ENCODE measurements at regions of chr11 and their contacts with region 1.

Region 1: GRCh38 chr11:134050541-134051383 is 18.1 kb upstream of the JAM3 start:
- DNase-seq: peak in 1 of 2 donors; percentile 34
- H3K4me3 ChIP-seq: peak overlapping the region in 2 of 3 donors; percentile 21 to 45
- H3K27ac ChIP-seq: no peak overlapping the region
- H3K4me1 ChIP-seq: peaks cover 0 to 2% of the 10 kb centered on the region in 2 donors
- H3K27me3 ChIP-seq: peaks cover 0 to 19% of the 10 kb centered on the region in 2 donors
- CTCF ChIP-seq: peak; percentile 71 to 92 (median 90)
- POLR2A ChIP-seq: no peak

Region 2: GRCh38 chr11:134139873-134140331 is 89.1 kb after region 1 on chr11:
- intact Hi-C with region 1: loop called (anchors 10 kb)
- DNase-seq: peak in 1 of 2 donors; percentile 62
- H3K4me3 ChIP-seq: no peak overlapping the region
- H3K27ac ChIP-seq: peak overlapping the region; percentile 59 to 70
- H3K4me1 ChIP-seq: no peaks in the 10 kb centered on the region
- H3K27me3 ChIP-seq: no peaks in the 10 kb centered on the region
- CTCF ChIP-seq: peak; percentile 47 to 88 (median 84)
- POLR2A ChIP-seq: no peak

Measured in breast epithelium (tissue), 4 donors.